ENCODE measurements at regions of chr1 and their contacts with region 1.

Region 1: DNA sequence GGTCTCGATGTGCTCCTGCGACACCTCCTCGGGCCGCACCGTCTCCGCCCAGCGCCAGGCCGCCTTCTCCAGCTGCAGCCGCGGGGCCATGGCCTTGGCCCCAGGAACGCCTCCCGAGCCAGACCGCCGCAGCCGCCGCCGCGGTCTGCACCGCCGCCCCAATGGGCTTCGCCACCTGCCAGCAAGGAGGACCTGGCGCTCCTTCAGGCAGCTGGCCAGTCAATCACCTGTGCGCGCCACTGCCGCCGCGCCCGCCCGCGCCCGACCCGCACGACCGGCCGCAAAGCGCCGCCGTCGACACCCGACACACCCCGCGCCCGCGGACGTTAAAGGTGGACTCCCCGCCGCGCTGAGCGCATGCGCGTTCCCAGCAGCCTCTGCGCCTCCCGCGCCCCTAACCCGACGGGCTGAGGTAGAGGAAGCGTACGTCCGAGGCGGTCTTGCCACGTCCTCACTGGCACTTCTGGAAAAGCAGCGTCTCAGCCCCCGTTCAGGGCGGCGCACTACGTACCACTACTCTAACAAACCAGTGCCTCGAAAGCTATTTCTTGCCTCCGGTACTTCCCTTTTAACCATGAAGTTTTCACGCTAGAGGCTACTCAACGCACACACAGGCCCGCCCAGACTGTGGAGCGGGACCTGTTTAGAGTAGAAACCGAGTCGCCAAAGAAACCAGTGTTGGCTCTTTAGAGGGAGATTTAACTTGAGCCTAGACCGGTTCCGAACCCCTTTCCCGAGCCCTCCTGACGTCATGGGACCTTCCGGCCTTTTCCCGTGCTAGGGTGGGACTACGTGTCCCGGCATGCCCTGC is at the start of gene USP48:
- DNase-seq: peak; percentile 97
- H3K4me3 Mint-ChIP-seq: peak within 1 kb of the TSS; percentile 95
- H3K27ac Mint-ChIP-seq: peak within 1 kb of the TSS; percentile 100
- H3K4me1 Mint-ChIP-seq: peaks cover 25% of the 10 kb centered on the region
- H3K27me3 Mint-ChIP-seq: no peaks in the 10 kb centered on the region
- total RNA-seq, gene USP48: 89.9 to 93.4 TPM

Region 2: GRCh38 chr1:21294266-21294989 is 488.6 kb before region 1 on chr1:
- CTCF ChIA-PET with region 1: no interaction called
- intact Hi-C with region 1: loop called (anchors 1 kb)
- DNase-seq: peak; percentile 97
- H3K4me3 Mint-ChIP-seq: peak overlapping the region; percentile 67
- H3K27ac Mint-ChIP-seq: peak overlapping the region; percentile 99
- H3K4me1 Mint-ChIP-seq: peaks cover 89% of the 10 kb centered on the region
- H3K27me3 Mint-ChIP-seq: no peaks in the 10 kb centered on the region

Region 3: GRCh38 chr1:21669258-21670058 is 113.6 kb before region 1 on chr1 and contains the start of gene RAP1GAP:
- CTCF ChIA-PET with region 1: interaction called, 5 read pairs
- intact Hi-C with region 1: loop called (anchors 2 kb)
- DNase-seq: peak; percentile 51
- H3K4me3 Mint-ChIP-seq: peak within 1 kb of the TSS; percentile 56
- H3K27ac Mint-ChIP-seq: no peak within 1 kb of the TSS
- H3K4me1 Mint-ChIP-seq: peaks cover 4% of the 10 kb centered on the region
- H3K27me3 Mint-ChIP-seq: peaks cover 35% of the 10 kb centered on the region
- total RNA-seq, gene RAP1GAP: 0.15 to 0.41 TPM

Region 4: GRCh38 chr1:21741206-21741605 is 41.9 kb before region 1 on chr1:
- CTCF ChIA-PET with region 1: interaction called, 3 read pairs
- intact Hi-C with region 1: loop called (anchors 2 kb)
- DNase-seq: no peak
- H3K4me3 Mint-ChIP-seq: no peak overlapping the region
- H3K27ac Mint-ChIP-seq: no peak overlapping the region
- H3K4me1 Mint-ChIP-seq: peaks cover 15% of the 10 kb centered on the region
- H3K27me3 Mint-ChIP-seq: no peaks in the 10 kb centered on the region

Region 5: GRCh38 chr1:21956720-21957552 is 173.9 kb after region 1 on chr1:
- CTCF ChIA-PET with region 1: interaction called, 3 read pairs
- intact Hi-C with region 1: loop called (anchors 2 kb)
- DNase-seq: peak; percentile 69
- H3K4me3 Mint-ChIP-seq: peak overlapping the region; percentile 55
- H3K27ac Mint-ChIP-seq: peak overlapping the region; percentile 86
- H3K4me1 Mint-ChIP-seq: peaks cover 29% of the 10 kb centered on the region
- H3K27me3 Mint-ChIP-seq: no peaks in the 10 kb centered on the region

Region 6: DNA sequence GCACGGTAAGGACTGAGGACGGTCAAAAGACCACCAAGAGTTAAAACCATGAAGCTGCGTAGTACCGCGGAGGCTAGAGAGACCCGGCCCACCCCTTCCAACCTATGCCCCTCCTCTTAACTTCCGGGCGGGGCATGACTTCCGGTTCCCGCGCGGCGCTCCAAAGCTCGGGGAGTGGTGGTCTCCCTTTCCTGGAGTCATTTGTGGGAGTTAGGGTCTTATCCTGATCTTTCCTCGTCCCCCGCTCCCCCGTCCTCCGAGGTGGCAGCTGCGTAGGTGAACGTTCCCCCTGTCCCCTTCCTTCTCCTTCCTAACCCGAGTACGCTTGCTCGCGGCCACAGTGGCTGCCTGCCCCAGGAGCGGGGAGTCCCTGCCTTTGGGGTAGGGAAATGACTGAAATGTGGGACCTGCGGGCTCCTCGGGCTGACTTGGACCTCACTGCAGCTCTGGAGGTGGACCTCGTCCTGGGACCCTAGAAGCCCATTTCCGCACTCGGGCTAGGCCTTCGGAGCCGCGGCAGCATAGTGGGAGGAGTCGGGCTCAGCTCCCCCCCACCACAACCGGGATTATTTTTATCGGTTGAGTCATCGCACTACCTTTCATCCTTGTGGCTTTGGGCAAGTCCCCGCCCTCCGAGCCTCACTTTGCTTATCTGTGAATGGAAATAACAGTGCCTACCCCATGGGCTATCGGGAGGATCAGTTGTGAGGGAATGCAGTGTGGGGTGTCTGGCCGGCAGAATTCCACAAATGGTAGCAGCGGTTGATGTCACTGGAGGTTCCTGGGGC is 242.5 kb after region 1 on chr1:
- CTCF ChIA-PET with region 1: interaction called, 3 read pairs
- intact Hi-C with region 1: loop called (anchors 1 kb)
- DNase-seq: peak; percentile 94
- H3K4me3 Mint-ChIP-seq: peak overlapping the region; percentile 88
- H3K27ac Mint-ChIP-seq: peak overlapping the region; percentile 97
- H3K4me1 Mint-ChIP-seq: peaks cover 54% of the 10 kb centered on the region
- H3K27me3 Mint-ChIP-seq: no peaks in the 10 kb centered on the region

Region 7: GRCh38 chr1:22451702-22452474 is 668.8 kb after region 1 on chr1 and contains the start of gene ZBTB40:
- CTCF ChIA-PET with region 1: no interaction called
- intact Hi-C with region 1: loop called (anchors 5 kb)
- DNase-seq: peak; percentile 96
- H3K4me3 Mint-ChIP-seq: peak within 1 kb of the TSS; percentile 85
- H3K27ac Mint-ChIP-seq: peak within 1 kb of the TSS; percentile 80
- H3K4me1 Mint-ChIP-seq: peaks cover 35% of the 10 kb centered on the region
- H3K27me3 Mint-ChIP-seq: no peaks in the 10 kb centered on the region
- total RNA-seq, gene ZBTB40: 11.5 to 13.1 TPM